ENCODE measurements at regions of chr1 and their contacts with region 1.

Region 1: DNA sequence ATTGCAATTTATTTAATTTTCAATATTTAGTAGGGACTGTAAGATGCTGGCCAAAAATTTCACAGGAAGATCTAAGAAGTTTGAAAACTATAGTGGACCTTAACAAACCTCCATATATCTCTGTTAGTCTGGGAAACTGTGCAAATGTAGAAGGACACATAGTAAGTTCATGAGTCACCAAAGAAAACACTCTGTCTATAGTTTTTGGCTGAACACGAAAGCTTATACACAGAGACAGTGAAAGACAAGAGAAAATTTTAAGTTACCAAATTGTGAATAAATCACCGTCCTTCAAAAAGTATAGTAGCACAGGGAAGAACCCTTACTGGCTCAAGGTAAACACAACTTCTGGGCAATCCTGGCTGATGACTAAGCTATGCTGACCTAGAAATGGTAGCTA is 1057.8 kb downstream of the AMY1C start:
- DNase-seq: no peak
- H3K4me3 ChIP-seq: no peak overlapping the region
- H3K4me3 Mint-ChIP-seq: no peak overlapping the region
- H3K27ac ChIP-seq: no peak overlapping the region
- H3K27ac Mint-ChIP-seq: no peak overlapping the region
- H3K4me1 ChIP-seq: no peaks in the 10 kb centered on the region
- H3K4me1 Mint-ChIP-seq: no peaks in the 10 kb centered on the region
- H3K27me3 ChIP-seq: no peaks in the 10 kb centered on the region
- H3K27me3 Mint-ChIP-seq: no peaks in the 10 kb centered on the region
- CTCF ChIP-seq: no peak

Region 2: GRCh38 chr1:104760017-104760416 is 47.5 kb before region 1 on chr1:
- intact Hi-C with region 1: loop called in 1 of 2 experiments (anchors 10 kb)
- DNase-seq: no peak
- H3K4me3 ChIP-seq: no peak overlapping the region
- H3K4me3 Mint-ChIP-seq: no peak overlapping the region
- H3K27ac ChIP-seq: no peak overlapping the region
- H3K27ac Mint-ChIP-seq: no peak overlapping the region
- H3K4me1 ChIP-seq: no peaks in the 10 kb centered on the region
- H3K4me1 Mint-ChIP-seq: no peaks in the 10 kb centered on the region
- H3K27me3 ChIP-seq: no peaks in the 10 kb centered on the region
- H3K27me3 Mint-ChIP-seq: no peaks in the 10 kb centered on the region
- CTCF ChIP-seq: no peak

Measured in CD14-positive monocyte (primary cell).